ENCODE measurements at regions of chr5 and their contacts with region 1.

Region 1: DNA sequence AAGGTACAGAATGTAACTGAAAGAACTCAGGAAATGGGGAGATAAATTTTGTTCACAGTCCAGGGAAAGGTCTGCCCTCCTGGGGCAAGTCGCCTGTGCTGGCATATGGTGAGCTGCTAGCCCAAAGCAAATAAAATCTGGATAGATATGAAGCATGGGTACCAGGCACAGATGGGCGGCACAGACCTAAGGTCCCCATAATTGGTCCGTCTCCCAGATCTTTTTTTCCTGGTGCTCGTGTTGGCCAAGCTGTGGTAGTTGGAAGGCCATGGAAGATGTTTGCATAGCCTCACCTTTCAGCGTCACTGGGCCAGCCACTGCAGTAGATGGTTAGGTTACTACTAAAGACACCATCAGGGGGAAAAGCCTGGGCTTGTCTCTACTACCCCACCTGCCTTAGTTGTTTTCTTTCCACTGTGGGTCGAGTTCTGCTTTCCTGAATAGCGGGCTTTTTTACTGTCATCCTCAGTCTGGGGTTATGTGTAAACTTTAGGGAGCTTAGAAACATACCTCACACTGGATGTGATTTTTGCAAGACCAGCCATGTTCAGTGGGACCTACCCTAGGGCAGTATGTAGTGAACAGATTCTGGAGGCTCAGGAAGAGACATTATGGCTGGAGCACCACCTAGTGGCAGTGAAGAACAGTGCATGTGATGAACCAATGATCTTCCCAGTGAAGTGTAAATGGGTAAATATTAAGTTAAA is 24.2 kb upstream of the GLRX start:
- DNase-seq: peak; percentile 32
- H3K4me3 ChIP-seq: no peak overlapping the region
- H3K27ac ChIP-seq: no peak overlapping the region
- H3K4me1 ChIP-seq: peaks cover 25% of the 10 kb centered on the region
- H3K27me3 ChIP-seq: no peaks in the 10 kb centered on the region
- CTCF ChIP-seq: peak; percentile 98

Region 2: GRCh38 chr5:95644351-95645042 is 202.2 kb before region 1 on chr5:
- intact Hi-C with region 1: loop called (anchors 5 kb)
- DNase-seq: no peak
- H3K4me3 ChIP-seq: no peak overlapping the region
- H3K27ac ChIP-seq: peak overlapping the region; percentile 97
- H3K4me1 ChIP-seq: peaks cover 16% of the 10 kb centered on the region
- H3K27me3 ChIP-seq: no peaks in the 10 kb centered on the region
- CTCF ChIP-seq: peak; percentile 76

Region 3: GRCh38 chr5:95781101-95781583 is 65.6 kb before region 1 on chr5:
- intact Hi-C with region 1: loop called (anchors 1 kb)
- DNase-seq: peak; percentile 78
- H3K4me3 ChIP-seq: no peak overlapping the region
- H3K27ac ChIP-seq: peak overlapping the region; percentile 62
- H3K4me1 ChIP-seq: peaks cover 54% of the 10 kb centered on the region
- H3K27me3 ChIP-seq: no peaks in the 10 kb centered on the region
- CTCF ChIP-seq: peak; percentile 92

Region 4: DNA sequence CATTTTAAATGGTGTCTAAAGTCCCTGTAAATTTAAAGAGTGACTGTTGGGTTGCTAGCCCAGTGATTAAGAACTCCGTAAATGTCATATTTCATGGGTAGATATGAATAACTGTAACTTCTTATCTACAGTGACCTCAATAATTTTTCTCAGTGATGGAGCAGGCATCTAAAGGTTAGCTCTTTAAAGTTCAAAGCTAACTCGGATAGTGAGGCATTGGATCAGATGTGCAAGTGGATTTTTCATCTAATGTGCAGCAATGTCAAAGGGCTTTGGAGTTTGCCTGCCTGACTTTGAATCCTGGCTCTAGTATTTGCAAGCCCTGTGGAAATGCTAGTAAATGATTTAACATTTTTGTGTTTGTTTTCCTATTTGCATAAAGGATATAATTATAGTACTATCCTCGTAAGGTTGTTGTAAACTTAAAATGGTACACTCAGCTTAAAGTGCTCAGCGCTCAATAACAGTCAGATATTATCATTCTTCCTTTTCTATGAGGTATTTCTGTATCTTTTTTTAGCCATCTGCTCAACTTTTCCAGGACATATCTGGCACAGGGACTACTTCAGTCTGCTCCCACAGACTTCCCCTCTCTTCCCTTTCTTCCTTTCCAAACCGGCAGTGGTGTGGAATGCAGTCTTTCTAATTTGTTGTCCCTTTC is 278.7 kb after region 1 on chr5:
- intact Hi-C with region 1: no loop called
- DNase-seq: no peak
- H3K4me3 ChIP-seq: peak overlapping the region; percentile 44
- H3K27ac ChIP-seq: peak overlapping the region; percentile 12
- H3K4me1 ChIP-seq: peaks cover 22% of the 10 kb centered on the region
- H3K27me3 ChIP-seq: no peaks in the 10 kb centered on the region
- CTCF ChIP-seq: no peak